A673 (cell line): ENCODE measurements at regions of chr17 and their contacts with region 1.

Region 1: GRCh38 chr17:46193626-46194392 is 580 bp upstream of the KANSL1 start:
- DNase-seq: peak; percentile 97
- H3K4me3 ChIP-seq: peak overlapping the region; percentile 72
- H3K27ac ChIP-seq: peak overlapping the region; percentile 91
- H3K4me1 ChIP-seq: peaks cover 20% of the 10 kb centered on the region
- H3K27me3 ChIP-seq: no peaks in the 10 kb centered on the region
- CTCF ChIP-seq: peak; percentile 7; the same call in 1 of the 2 replicates

Region 2: DNA sequence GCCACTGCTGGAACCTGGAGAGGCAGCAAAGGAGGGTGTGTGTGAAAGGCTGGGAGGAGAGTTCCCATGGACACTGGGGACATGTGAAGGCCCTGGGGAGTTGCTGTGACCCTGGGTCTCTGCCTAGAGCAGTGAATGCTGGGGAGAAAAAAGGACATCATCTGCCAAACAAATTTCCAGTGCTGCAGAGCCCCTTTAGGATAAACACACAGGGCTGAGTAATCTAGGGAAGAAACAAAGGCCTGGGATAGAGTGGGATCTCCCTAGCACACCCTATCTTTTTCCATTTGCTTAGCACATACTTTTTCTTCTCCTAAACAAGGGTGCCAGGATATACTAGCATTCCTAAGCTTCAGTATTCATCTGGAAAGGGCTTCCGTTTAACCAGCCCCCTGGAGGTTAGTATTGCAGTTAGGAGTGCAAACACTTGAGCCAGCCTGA is 1349.4 kb before region 1 on chr17:
- CTCF ChIA-PET with region 1: no interaction called
- POLR2A ChIA-PET with region 1: no interaction called
- intact Hi-C with region 1: no loop called
- DNase-seq: no peak
- H3K4me3 ChIP-seq: no peak overlapping the region
- H3K27ac ChIP-seq: no peak overlapping the region
- H3K4me1 ChIP-seq: no peaks in the 10 kb centered on the region
- H3K27me3 ChIP-seq: no peaks in the 10 kb centered on the region
- CTCF ChIP-seq: no peak

Region 3: DNA sequence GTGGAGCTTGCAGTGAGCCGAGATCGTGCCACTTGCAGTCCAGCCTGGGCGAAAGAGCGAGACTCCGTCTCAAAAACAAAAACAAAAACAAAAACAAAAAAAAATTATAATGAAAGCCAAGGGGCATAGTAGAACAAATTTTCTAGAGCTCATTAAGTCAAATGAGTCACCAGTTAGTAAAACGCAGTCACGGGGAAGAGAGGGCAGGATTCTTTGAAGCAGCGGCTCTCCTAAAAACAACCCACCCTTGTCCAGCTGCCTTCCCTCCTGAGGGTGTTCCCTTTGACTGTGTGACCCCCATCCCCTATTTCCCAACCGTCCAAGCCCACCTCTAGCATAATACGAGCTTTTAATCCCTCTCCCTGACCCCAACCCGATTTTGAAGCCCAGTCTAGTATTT is 238.9 kb before region 1 on chr17:
- CTCF ChIA-PET with region 1: no interaction called
- POLR2A ChIA-PET with region 1: no interaction called
- intact Hi-C with region 1: no loop called
- DNase-seq: no peak
- H3K4me3 ChIP-seq: no peak overlapping the region
- H3K27ac ChIP-seq: no peak overlapping the region
- H3K4me1 ChIP-seq: no peaks in the 10 kb centered on the region
- H3K27me3 ChIP-seq: no peaks in the 10 kb centered on the region
- CTCF ChIP-seq: no peak

Region 4: GRCh38 chr17:45980855-45981254 is 213.0 kb before region 1 on chr17:
- CTCF ChIA-PET with region 1: no interaction called
- POLR2A ChIA-PET with region 1: no interaction called
- intact Hi-C with region 1: no loop called
- DNase-seq: no peak
- H3K4me3 ChIP-seq: no peak overlapping the region
- H3K27ac ChIP-seq: no peak overlapping the region
- H3K4me1 ChIP-seq: no peaks in the 10 kb centered on the region
- H3K27me3 ChIP-seq: no peaks in the 10 kb centered on the region
- CTCF ChIP-seq: no peak

Region 5: GRCh38 chr17:46044286-46044928 is 149.4 kb before region 1 on chr17:
- CTCF ChIA-PET with region 1: interaction called, 8 read pairs
- POLR2A ChIA-PET with region 1: no interaction called
- intact Hi-C with region 1: loop called (anchors 10 kb)
- DNase-seq: peak; percentile 81
- H3K4me3 ChIP-seq: no peak overlapping the region
- H3K27ac ChIP-seq: no peak overlapping the region
- H3K4me1 ChIP-seq: no peaks in the 10 kb centered on the region
- H3K27me3 ChIP-seq: no peaks in the 10 kb centered on the region
- CTCF ChIP-seq: peak; percentile 74

Region 6: DNA sequence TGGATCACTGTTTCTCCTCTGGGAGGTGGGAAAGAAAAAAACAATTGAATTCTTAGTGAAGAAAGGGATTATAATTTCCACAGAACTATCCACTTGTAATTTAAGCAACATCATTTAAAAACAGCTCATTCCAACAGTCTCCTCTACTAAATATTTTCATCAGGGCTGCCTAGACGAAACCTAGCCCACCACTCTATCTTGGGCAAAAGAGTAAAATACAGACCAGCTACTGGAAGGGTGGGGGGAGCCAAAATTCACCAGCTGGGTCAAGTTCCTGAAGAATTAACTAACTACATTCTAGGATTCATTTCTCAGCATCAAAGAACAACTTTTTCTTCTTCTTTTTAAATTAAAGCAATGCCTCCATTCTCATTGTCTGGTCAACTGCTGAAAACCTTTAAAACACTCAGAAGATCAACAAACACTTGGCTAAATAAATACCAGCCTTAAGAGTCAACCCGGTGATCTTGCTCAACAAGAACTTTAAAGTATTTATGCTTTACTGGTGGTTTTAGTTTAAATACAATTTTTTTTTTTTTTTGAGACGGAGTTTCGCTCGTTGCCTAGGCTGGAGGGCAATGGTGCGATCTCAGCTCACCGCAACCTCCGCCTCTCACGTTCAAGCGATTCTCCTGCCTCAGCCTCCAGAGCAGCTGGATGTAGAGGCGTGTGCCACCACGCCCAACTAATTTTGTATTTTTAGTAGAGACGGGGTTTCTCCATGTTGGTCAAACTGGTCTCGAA is 25.8 kb before region 1 on chr17:
- CTCF ChIA-PET with region 1: interaction called, 18 read pairs
- POLR2A ChIA-PET with region 1: no interaction called
- intact Hi-C with region 1: no loop called
- DNase-seq: no peak
- H3K4me3 ChIP-seq: no peak overlapping the region
- H3K27ac ChIP-seq: peak overlapping the region; percentile 65
- H3K4me1 ChIP-seq: peaks cover 44% of the 10 kb centered on the region
- H3K27me3 ChIP-seq: no peaks in the 10 kb centered on the region
- CTCF ChIP-seq: no peak

Region 7: DNA sequence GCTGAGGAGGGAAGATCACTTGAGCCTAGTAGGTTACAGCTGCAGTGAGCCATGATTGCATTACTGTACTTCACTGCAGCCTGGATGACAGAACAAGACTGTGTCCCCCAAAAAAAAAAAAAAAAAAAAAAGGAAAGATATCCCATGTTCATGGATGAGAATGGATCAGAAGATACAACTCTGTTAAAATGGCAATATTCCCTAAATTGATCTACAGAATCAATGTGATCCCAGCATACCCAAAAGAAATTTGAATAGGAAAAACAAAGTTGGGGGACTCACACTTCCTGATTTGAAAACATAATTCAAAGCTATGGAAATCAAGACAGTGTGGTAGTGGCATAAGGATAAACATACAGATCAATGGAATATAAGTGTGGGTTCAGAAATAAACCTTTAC is 12.2 kb after region 1 on chr17:
- CTCF ChIA-PET with region 1: interaction called, 11 read pairs
- POLR2A ChIA-PET with region 1: no interaction called
- intact Hi-C with region 1: no loop called
- DNase-seq: no peak
- H3K4me3 ChIP-seq: no peak overlapping the region
- H3K27ac ChIP-seq: no peak overlapping the region
- H3K4me1 ChIP-seq: no peaks in the 10 kb centered on the region
- H3K27me3 ChIP-seq: no peaks in the 10 kb centered on the region
- CTCF ChIP-seq: no peak

Region 8: DNA sequence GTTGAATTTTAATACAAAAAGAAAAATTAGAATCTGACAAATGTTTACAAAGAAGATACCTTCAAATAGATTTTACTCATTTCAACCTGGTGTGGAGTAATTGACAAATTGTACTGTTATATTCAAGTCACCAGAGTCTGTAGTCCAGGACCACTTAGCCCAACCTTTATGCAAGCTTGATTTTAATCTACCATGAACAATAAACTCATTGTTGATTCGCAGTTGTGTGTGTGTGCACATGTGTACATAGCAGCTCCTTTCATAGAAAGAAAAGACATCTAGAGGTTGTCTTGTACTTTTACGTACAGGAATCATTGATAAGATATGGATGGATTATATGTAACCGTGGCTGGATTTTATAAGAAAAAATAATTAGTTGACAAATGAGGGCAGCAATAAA is 80.4 kb after region 1 on chr17:
- CTCF ChIA-PET with region 1: no interaction called
- POLR2A ChIA-PET with region 1: interaction called, 10 read pairs
- intact Hi-C with region 1: no loop called
- DNase-seq: no peak
- H3K4me3 ChIP-seq: no peak overlapping the region
- H3K27ac ChIP-seq: no peak overlapping the region
- H3K4me1 ChIP-seq: no peaks in the 10 kb centered on the region
- H3K27me3 ChIP-seq: no peaks in the 10 kb centered on the region
- CTCF ChIP-seq: no peak